ENCODE measurements at regions of chr22 and their contacts with region 1.

Region 1: GRCh38 chr22:40572976-40573375 is 63.5 kb downstream of the MRTFA start:
- DNase-seq: no peak
- ATAC-seq: no peak
- H3K4me3 ChIP-seq: no peak overlapping the region
- H3K27ac ChIP-seq: no peak overlapping the region
- H3K4me1 ChIP-seq: peaks cover 5% of the 10 kb centered on the region
- H3K27me3 ChIP-seq: no peaks in the 10 kb centered on the region
- CTCF ChIP-seq: no peak

Region 2: GRCh38 chr22:39685336-39686177 is 887.4 kb before region 1 on chr22:
- CTCF ChIA-PET with region 1: no interaction called
- POLR2A ChIA-PET with region 1: interaction called, 17 read pairs
- intact Hi-C with region 1: no loop called
- DNase-seq: no peak
- ATAC-seq: no peak
- H3K4me3 ChIP-seq: no peak overlapping the region
- H3K27ac ChIP-seq: no peak overlapping the region
- H3K4me1 ChIP-seq: no peaks in the 10 kb centered on the region
- H3K27me3 ChIP-seq: no peaks in the 10 kb centered on the region; the same call in 1 of the 2 replicates
- CTCF ChIP-seq: no peak

Region 3: GRCh38 chr22:40491990-40492631 is 80.9 kb before region 1 on chr22:
- CTCF ChIA-PET with region 1: no interaction called
- POLR2A ChIA-PET with region 1: no interaction called
- intact Hi-C with region 1: no loop called
- DNase-seq: no peak
- ATAC-seq: no peak
- H3K4me3 ChIP-seq: no peak overlapping the region
- H3K27ac ChIP-seq: no peak overlapping the region
- H3K4me1 ChIP-seq: peaks cover 6% of the 10 kb centered on the region
- H3K27me3 ChIP-seq: no peaks in the 10 kb centered on the region
- CTCF ChIP-seq: no peak

Measured in PC-3 (cell line).